ENCODE measurements at regions of chr3 and their contacts with region 1.

Region 1: GRCh38 chr3:185585859-185586685 is at the start of gene SENP2:
- DNase-seq: peak; percentile 99 to 100
- H3K4me3 ChIP-seq: peak within 1 kb of the TSS; percentile 78
- H3K27ac ChIP-seq: peak within 1 kb of the TSS; percentile 73
- H3K4me1 ChIP-seq: peaks cover 18% of the 10 kb centered on the region
- H3K27me3 ChIP-seq: no peaks in the 10 kb centered on the region
- CTCF ChIP-seq: no peak
- total RNA-seq, gene SENP2: 66.5 and 89.5 TPM in 2 replicates

Region 2: DNA sequence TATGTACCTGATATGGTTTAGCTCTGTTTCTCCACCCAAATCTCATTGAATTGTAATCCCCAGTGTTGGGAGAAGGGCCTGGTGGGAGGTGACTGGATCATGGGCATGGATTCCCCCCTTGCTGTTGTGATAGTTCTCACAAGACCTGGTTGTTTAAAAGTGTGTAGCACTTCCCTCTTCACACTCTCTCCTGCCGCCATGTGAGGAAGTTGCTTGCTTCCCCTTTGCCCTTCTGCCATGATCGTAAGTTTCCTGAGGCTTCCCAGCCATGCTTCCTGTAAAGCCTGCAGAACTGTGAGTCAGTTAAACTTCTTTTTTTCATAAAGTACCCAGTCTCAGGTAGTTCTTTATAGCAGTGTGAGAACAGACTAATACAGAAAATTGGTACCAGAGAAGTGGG is 526.3 kb before region 1 on chr3:
- CTCF ChIA-PET with region 1: no interaction called
- POLR2A ChIA-PET with region 1: no interaction called
- intact Hi-C with region 1: no loop called
- DNase-seq: no peak
- H3K4me3 ChIP-seq: no peak overlapping the region
- H3K27ac ChIP-seq: no peak overlapping the region
- H3K4me1 ChIP-seq: no peaks in the 10 kb centered on the region
- H3K27me3 ChIP-seq: no peaks in the 10 kb centered on the region
- CTCF ChIP-seq: no peak

Region 3: GRCh38 chr3:185362850-185363661 is 223.0 kb before region 1 on chr3 and contains the start of gene MAP3K13:
- CTCF ChIA-PET with region 1: no interaction called
- POLR2A ChIA-PET with region 1: interaction called, 6 read pairs
- intact Hi-C with region 1: loop called (anchors 5 kb)
- DNase-seq: peak; percentile 83 to 99
- H3K4me3 ChIP-seq: peak within 1 kb of the TSS; percentile 66
- H3K27ac ChIP-seq: peak within 1 kb of the TSS; percentile 55
- H3K4me1 ChIP-seq: peaks cover 24% of the 10 kb centered on the region
- H3K27me3 ChIP-seq: no peaks in the 10 kb centered on the region
- CTCF ChIP-seq: no peak
- total RNA-seq, gene MAP3K13: 42.2 and 65.5 TPM in 2 replicates

Region 4: GRCh38 chr3:185498503-185499396 is 87.3 kb before region 1 on chr3 and contains the start of gene TMEM41A:
- CTCF ChIA-PET with region 1: no interaction called
- POLR2A ChIA-PET with region 1: interaction called, 3 read pairs
- intact Hi-C with region 1: loop called (anchors 5 kb)
- DNase-seq: peak; percentile 81 to 98
- H3K4me3 ChIP-seq: peak within 1 kb of the TSS; percentile 78
- H3K27ac ChIP-seq: peak within 1 kb of the TSS; percentile 74
- H3K4me1 ChIP-seq: peaks cover 11% of the 10 kb centered on the region
- H3K27me3 ChIP-seq: no peaks in the 10 kb centered on the region
- CTCF ChIP-seq: 0 out of 2 replicates have a peak, but pooled peaks have one; percentile 17
- total RNA-seq, gene TMEM41A: 37.2 and 54.1 TPM in 2 replicates

Region 5: GRCh38 chr3:185561374-185561943 is 24.6 kb before region 1 on chr3:
- CTCF ChIA-PET with region 1: interaction called, 7 read pairs
- POLR2A ChIA-PET with region 1: interaction called, 24 read pairs
- intact Hi-C with region 1: no loop called
- DNase-seq: peak; percentile 26 to 60
- H3K4me3 ChIP-seq: peak overlapping the region; percentile 53; the same call in 1 of the 2 replicates
- H3K27ac ChIP-seq: peak overlapping the region; percentile 99; the same call in 1 of the 2 replicates
- H3K4me1 ChIP-seq: peaks cover 49% of the 10 kb centered on the region
- H3K27me3 ChIP-seq: no peaks in the 10 kb centered on the region
- CTCF ChIP-seq: no peak